ENCODE measurements at regions of chr5 and their contacts with region 1.

Region 1: GRCh38 chr5:177303121-177303924 is at the starts of genes PRELID1 and RAB24:
- DNase-seq: peak; percentile 73 to 95 (median 86)
- ATAC-seq: peak; percentile 67
- H3K4me3 ChIP-seq: peak within 1 kb of the TSS; percentile 92
- H3K4me3 Mint-ChIP-seq: peak within 1 kb of the TSS; percentile 90
- H3K27ac ChIP-seq: peak within 1 kb of the TSS; percentile 60 to 78
- H3K27ac Mint-ChIP-seq: peak within 1 kb of the TSS; percentile 88
- H3K4me1 ChIP-seq: peaks cover 82% of the 10 kb centered on the region
- H3K4me1 Mint-ChIP-seq: peaks cover 81% of the 10 kb centered on the region
- H3K27me3 ChIP-seq: no peaks in the 10 kb centered on the region
- H3K27me3 Mint-ChIP-seq: no peaks in the 10 kb centered on the region
- CTCF ChIP-seq: peak; percentile 43
- total RNA-seq, gene PRELID1: 33.1 to 35.0 TPM
- total RNA-seq, gene RAB24: 17.0 to 18.0 TPM

Region 2: DNA sequence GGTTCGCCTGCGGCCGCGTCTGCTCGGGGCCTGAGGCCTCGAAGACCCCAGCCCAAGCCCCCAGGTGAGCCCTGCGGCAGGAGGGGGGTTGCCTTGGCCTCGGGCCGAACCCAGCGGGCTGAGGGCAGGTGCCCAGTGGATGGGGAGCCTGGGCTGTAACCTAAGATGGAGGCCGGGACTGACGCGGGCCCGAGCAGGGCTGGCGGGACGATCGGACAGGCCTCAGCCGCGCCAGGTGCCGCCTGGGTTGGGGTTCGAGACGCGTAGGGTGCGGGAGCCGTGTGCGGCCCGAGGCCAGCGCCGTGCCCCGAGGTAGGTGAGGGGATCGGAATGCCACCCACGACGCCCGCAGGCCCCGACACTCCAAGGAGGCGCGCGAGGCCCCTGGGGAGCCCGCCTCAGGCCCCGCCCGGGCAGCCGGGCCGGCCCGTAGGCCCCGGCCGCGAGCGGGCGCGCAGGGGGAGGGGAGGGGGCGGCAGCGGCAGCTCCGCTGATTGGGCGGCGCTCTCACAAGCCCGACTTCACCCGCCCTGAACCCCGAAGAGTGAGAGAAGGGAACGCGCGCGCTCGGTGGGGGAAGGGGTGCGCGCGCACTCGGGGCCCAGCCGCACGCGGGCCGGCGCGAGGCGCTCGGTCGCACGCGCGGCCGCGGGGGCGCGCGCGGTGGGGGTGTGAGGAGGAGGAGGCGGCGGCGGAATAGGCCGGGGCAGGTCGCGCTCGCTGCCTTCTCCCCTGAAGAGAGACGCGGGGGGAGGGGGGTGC is 170.1 kb before region 1 on chr5 and contains the start of gene NSD1:
- CTCF ChIA-PET with region 1: no interaction called
- POLR2A ChIA-PET with region 1: interaction called, 6 read pairs
- intact Hi-C with region 1: loop called in 1 of 2 experiments (anchors 5 kb)
- DNase-seq: peak; percentile 83 to 97 (median 90)
- ATAC-seq: peak; percentile 71
- H3K4me3 ChIP-seq: peak within 1 kb of the TSS; percentile 65
- H3K4me3 Mint-ChIP-seq: peak within 1 kb of the TSS; percentile 90
- H3K27ac ChIP-seq: peak within 1 kb of the TSS; percentile 71 to 76
- H3K27ac Mint-ChIP-seq: peak within 1 kb of the TSS; percentile 97
- H3K4me1 ChIP-seq: peaks cover 54% of the 10 kb centered on the region
- H3K4me1 Mint-ChIP-seq: peaks cover 67% of the 10 kb centered on the region
- H3K27me3 ChIP-seq: no peaks in the 10 kb centered on the region
- H3K27me3 Mint-ChIP-seq: no peaks in the 10 kb centered on the region
- CTCF ChIP-seq: no peak
- total RNA-seq, gene NSD1: 87.6 to 93.3 TPM

Region 3: GRCh38 chr5:177382423-177383029 is 79.2 kb after region 1 on chr5:
- CTCF ChIA-PET with region 1: no interaction called
- POLR2A ChIA-PET with region 1: no interaction called
- intact Hi-C with region 1: no loop called
- DNase-seq: peak in 5 of 14 experiments; percentile 41 to 69 (median 67)
- ATAC-seq: peak; percentile 87
- H3K4me3 ChIP-seq: no peak overlapping the region
- H3K4me3 Mint-ChIP-seq: no peak overlapping the region
- H3K27ac ChIP-seq: no peak overlapping the region
- H3K27ac Mint-ChIP-seq: peak overlapping the region; percentile 14
- H3K4me1 ChIP-seq: peaks cover 78% of the 10 kb centered on the region
- H3K4me1 Mint-ChIP-seq: peaks cover 27% of the 10 kb centered on the region
- H3K27me3 ChIP-seq: no peaks in the 10 kb centered on the region
- H3K27me3 Mint-ChIP-seq: no peaks in the 10 kb centered on the region
- CTCF ChIP-seq: no peak

Region 4: DNA sequence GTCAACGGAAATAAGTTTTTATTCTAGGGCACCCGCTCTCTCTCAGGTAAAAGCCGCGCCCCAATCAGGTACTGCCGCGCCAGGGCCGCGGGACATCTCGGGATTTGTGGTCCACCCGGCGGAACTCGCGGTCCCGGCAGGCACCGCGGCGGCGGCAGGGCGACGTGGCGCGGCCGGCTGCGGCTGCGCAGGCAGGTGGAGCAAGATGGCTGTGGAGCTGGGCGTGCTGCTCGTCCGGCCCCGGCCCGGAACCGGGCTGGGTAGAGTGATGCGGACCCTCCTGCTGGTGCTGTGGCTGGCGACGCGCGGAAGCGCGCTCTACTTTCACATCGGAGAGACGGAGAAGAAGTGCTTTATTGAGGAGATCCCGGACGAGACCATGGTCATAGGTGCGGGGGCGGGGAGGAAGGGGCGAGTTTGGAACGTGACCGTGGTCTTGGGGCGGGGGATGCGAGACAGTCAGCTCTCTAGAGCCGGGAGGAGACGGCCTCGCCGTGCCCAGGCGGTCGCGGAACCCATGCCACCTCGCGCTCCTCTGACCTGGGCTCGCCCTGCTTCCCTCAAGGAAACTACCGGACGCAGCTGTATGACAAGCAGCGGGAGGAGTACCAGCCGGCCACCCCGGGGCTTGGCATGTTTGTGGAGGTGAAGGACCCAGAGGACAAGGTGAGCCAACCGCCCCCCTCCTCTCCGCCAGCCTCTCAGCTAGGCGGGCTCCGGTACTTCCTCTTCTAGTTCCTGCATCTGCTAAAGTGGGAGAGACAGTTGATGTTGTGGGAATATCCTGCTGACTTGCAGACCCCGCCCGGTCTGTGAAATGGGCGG is 288.9 kb after region 1 on chr5 and contains the start of gene TMED9:
- CTCF ChIA-PET with region 1: no interaction called
- POLR2A ChIA-PET with region 1: no interaction called
- intact Hi-C with region 1: loop called in 1 of 2 experiments (anchors 2 kb)
- DNase-seq: peak; percentile 77 to 94 (median 86)
- ATAC-seq: peak; percentile 99
- H3K4me3 ChIP-seq: peak within 1 kb of the TSS; percentile 71
- H3K4me3 Mint-ChIP-seq: peak within 1 kb of the TSS; percentile 100
- H3K27ac ChIP-seq: peak within 1 kb of the TSS; percentile 64 to 69
- H3K27ac Mint-ChIP-seq: peak within 1 kb of the TSS; percentile 87
- H3K4me1 ChIP-seq: peaks cover 32% of the 10 kb centered on the region
- H3K4me1 Mint-ChIP-seq: peaks cover 31% of the 10 kb centered on the region
- H3K27me3 ChIP-seq: no peaks in the 10 kb centered on the region
- H3K27me3 Mint-ChIP-seq: peaks cover 24% of the 10 kb centered on the region
- CTCF ChIP-seq: no peak
- total RNA-seq, gene TMED9: 42.7 to 47.8 TPM